ENCODE measurements at regions of chr1 and their contacts with region 1.

Region 1: DNA sequence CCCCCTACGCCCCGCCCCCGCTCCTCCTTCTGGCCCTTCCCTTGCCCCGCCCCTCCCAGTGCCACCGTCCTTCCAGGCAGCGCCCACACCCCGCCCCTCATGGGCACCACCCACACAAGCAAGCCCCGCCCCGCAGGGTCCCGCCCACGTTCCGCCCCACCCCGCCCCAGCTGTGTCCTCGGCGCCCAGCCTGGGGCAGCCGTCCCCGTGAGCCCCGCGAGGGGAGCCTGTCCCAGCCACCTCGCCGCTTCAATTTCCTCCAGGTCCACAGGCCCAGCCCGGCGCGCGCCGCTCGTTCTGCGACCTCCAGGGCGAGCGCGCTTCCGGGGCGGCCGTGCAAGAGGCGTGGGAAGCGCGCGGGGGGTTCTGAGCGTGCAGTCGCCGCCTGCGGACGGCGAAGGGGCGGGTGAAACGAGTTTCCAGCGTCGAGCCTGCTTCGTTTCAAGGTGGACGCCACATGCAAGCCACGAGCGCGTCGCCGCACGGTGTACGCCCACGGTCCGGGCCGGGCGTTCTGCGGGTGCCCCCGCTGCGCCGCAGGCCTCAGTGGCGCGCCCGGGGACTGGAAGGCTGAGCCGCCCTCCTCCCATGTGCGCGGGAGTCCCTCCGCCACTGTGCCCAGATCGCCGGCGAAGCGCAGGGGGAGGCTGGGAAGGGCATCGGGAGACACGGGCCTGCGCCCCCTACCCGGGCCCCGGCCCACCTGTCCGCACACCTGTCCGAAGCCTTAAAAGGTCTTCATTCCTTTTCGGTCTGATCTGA is 10.8 kb upstream of the FAAP20 start:
- ATAC-seq: peak; percentile 25 to 73 (median 65)
- H3K4me3 ChIP-seq: peak overlapping the region; percentile 2 to 17 (median 14)
- H3K27ac ChIP-seq: peak overlapping the region; percentile 17 to 19
- H3K4me1 ChIP-seq: peaks cover 28 to 56% of the 10 kb centered on the region in 2 donors

Region 2: GRCh38 chr1:2372551-2373490 is 167.4 kb after region 1 on chr1:
- in situ Hi-C with region 1: loop called in 2 of 9 experiments (anchors 25 kb)
- ATAC-seq: peak in 2 of 8 experiments; percentile 9 to 11
- H3K4me3 ChIP-seq: no peak overlapping the region
- H3K27ac ChIP-seq: no peak overlapping the region
- H3K4me1 ChIP-seq: peaks cover 0 to 6% of the 10 kb centered on the region in 2 donors

Region 3: GRCh38 chr1:2391041-2391930 is 185.9 kb after region 1 on chr1 and contains the starts of genes MORN1 and RER1:
- in situ Hi-C with region 1: loop called in 1 of 9 experiments (anchors 25 kb)
- ATAC-seq: peak; percentile 67 to 96 (median 94)
- H3K4me3 ChIP-seq: peak within 1 kb of the TSS; percentile 74 to 98 (median 85)
- H3K27ac ChIP-seq: peak within 1 kb of the TSS; percentile 85 to 98
- H3K4me1 ChIP-seq: peaks cover 15 to 18% of the 10 kb centered on the region in 2 donors
- total RNA-seq, gene MORN1: 13.5 to 28.6 (median 21.8) TPM
- total RNA-seq, gene RER1: 57.8 to 165 (median 86.4) TPM

Region 4: GRCh38 chr1:2921970-2922686 is 716.8 kb after region 1 on chr1:
- in situ Hi-C with region 1: no loop called
- ATAC-seq: peak in 1 of 8 experiments; percentile 20
- H3K4me3 ChIP-seq: no peak overlapping the region
- H3K27ac ChIP-seq: no peak overlapping the region
- H3K4me1 ChIP-seq: no peaks in the 10 kb centered on the region

Measured in motor neuron (in vitro differentiated cells).